ENCODE measurements at regions of chr5 and their contacts with region 1.

Region 1: DNA sequence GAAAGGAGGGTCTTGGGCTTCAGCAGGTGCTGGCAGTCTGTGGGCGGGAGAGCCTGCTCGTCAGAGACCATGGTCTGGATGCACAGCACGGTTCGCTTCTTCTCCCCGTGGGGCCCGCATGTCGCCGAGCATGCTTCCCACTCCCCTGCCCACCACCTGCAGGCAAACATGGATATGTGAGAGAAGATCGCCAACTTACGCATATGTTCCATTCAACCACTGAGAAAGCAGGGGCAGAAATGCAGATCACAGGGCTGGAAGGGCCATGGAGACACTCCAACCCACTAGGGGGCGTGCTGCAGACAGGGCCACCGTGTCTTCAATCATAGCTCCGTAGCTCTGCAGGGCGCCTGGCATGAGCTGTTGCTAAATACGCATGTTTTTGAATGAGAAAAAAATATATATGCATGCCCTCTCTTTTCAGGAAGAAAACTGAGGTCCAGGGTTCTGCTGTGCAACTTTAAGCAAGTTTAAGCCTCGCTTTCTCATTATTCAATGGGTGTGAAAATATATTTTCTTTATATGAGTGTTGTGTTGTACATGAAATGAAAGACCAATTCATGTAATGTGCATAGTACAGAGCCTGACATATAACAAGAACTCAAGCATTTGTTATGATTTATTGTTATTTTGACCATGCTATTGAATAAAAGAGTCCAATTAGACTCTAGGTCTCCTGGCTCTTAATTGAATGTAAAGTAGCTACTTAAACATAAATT is 148.0 kb downstream of the TARS1 start:
- DNase-seq: peak; percentile 72
- H3K4me3 ChIP-seq: no peak overlapping the region
- H3K27ac ChIP-seq: no peak overlapping the region
- H3K4me1 ChIP-seq: no peaks in the 10 kb centered on the region
- H3K27me3 ChIP-seq: no peaks in the 10 kb centered on the region
- CTCF ChIP-seq: peak; percentile 80

Region 2: DNA sequence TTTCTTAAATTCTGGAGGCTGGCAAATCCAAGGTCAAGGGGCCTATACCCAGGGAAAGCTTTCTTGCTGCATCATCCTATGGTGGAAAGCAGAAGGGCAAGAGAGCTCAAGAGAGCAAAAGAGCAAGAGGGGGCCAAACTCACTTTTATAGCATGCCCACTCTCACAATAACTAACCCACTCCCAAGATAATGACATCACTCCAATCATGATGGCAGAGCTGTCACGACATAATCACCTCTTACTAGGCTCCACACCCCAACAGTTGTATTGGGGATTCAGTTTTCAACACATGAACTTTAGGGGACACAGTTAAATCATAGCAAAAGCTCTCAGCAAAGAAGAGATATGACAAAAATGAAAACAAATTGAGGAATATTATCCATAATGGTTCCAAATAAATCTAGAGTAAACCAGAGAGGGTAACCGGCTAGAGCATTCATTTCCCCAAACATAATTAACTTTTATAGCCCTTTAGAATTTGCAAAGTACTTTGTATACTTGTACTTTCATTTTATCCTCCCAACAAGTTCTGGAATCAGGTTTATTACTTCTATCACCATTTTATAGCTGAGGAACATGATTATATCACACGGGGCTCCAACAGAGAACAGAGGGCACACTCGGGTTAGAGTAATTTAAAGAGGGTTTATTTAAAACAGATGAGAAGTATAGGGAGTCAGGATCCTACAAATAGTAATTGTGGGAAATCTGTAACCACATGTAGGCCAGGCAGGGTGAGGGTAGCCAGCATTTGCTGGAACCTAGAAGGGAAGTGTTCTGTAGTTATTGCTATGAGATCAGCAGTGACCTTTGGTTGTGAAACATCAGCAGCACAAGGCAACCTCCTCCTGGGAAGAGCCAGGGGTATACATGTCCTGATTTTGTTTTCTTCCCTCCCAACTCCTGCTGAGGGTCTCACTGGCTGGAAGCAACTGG is 155.2 kb before region 1 on chr5:
- CTCF ChIA-PET with region 1: no interaction called
- POLR2A ChIA-PET with region 1: no interaction called
- intact Hi-C with region 1: no loop called
- DNase-seq: no peak
- H3K4me3 ChIP-seq: no peak overlapping the region
- H3K27ac ChIP-seq: no peak overlapping the region
- H3K4me1 ChIP-seq: no peaks in the 10 kb centered on the region
- H3K27me3 ChIP-seq: no peaks in the 10 kb centered on the region
- CTCF ChIP-seq: no peak

Region 3: GRCh38 chr5:33482335-33482734 is 106.5 kb before region 1 on chr5:
- CTCF ChIA-PET with region 1: no interaction called
- POLR2A ChIA-PET with region 1: interaction called, 19 read pairs
- intact Hi-C with region 1: no loop called
- DNase-seq: peak; percentile 71
- H3K4me3 ChIP-seq: no peak overlapping the region
- H3K27ac ChIP-seq: no peak overlapping the region
- H3K4me1 ChIP-seq: peaks cover 6% of the 10 kb centered on the region
- H3K27me3 ChIP-seq: no peaks in the 10 kb centered on the region
- CTCF ChIP-seq: no peak